Caco-2 (cell line): ENCODE measurements at regions of chrX and their contacts with region 1.

Region 1: GRCh38 chrX:11143931-11144678 is 33.0 kb downstream of the HCCS start:
- DNase-seq: peak; percentile 56 to 69
- H3K4me3 ChIP-seq: no peak overlapping the region
- H3K4me3 Mint-ChIP-seq: no peak overlapping the region
- H3K27ac Mint-ChIP-seq: no peak overlapping the region
- H3K4me1 ChIP-seq: no peaks in the 10 kb centered on the region
- H3K4me1 Mint-ChIP-seq: peaks cover 6% of the 10 kb centered on the region
- H3K27me3 ChIP-seq: no peaks in the 10 kb centered on the region
- H3K27me3 Mint-ChIP-seq: no peaks in the 10 kb centered on the region
- CTCF ChIP-seq: peak; percentile 39 to 52

Region 2: DNA sequence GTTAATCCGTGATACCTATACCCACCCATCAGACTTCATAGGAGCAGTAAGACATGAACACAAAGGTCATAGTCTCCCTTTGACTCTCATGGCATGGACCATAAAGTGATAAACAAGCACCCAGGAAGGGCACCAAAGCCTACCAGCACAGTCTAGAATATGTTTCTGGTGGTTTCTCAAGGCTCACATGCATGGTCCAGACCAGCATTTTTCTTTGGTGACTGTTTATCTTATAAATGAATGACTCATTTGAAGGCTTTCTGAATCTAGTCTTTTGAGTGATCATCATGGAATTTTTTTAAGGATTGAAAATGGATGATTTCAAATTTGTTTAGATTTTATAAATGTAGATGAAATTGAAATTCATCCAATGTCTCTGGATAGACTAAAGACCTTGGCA is 117.2 kb after region 1 on chrX:
- CTCF ChIA-PET with region 1: no interaction called
- POLR2A ChIA-PET with region 1: no interaction called
- intact Hi-C with region 1: loop called (anchors 2 kb)
- DNase-seq: no peak
- H3K4me3 ChIP-seq: no peak overlapping the region
- H3K4me3 Mint-ChIP-seq: no peak overlapping the region
- H3K27ac Mint-ChIP-seq: no peak overlapping the region
- H3K4me1 ChIP-seq: peaks cover 16% of the 10 kb centered on the region
- H3K4me1 Mint-ChIP-seq: peaks cover 22% of the 10 kb centered on the region
- H3K27me3 ChIP-seq: no peaks in the 10 kb centered on the region
- H3K27me3 Mint-ChIP-seq: no peaks in the 10 kb centered on the region
- CTCF ChIP-seq: no peak

Region 3: DNA sequence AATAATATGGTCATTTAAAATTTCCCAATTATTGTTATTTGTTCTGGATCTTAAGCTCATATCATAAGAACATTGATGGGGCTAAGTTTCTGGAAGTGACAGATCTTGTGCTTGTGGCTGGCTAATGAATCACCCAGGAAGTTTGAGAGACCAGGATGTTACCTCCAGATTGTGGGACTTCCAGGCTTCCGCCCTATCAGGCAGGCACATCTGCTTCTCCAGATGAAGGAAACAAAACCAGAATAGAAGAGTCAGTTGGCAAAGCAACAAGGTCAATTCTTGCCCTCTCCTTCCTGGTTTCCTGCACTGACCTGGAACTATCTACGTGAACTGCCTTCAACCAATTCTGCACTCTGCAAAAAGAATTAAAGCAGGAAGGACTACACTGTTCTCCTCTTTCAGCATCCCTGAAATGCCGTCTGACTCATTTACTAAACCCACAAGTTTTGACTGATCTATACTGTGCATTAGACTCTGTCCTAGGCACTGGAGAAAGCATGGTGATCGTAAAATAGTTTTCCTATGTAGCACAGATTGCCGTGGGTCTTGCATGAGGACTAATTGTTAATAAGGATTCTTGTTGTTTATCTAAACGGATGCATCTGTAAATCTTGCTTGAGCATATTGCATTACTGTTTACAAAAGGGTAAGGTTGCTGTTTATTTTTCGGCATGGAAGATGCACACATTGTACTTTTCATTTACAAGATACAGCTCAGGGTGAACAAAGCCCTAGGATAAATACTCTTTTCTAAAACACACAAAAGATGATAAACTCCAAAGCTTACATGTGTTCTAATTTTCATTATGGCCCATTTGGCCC is 223.7 kb after region 1 on chrX:
- CTCF ChIA-PET with region 1: no interaction called
- POLR2A ChIA-PET with region 1: no interaction called
- intact Hi-C with region 1: loop called (anchors 1 kb)
- DNase-seq: no peak
- H3K4me3 ChIP-seq: no peak overlapping the region
- H3K4me3 Mint-ChIP-seq: no peak overlapping the region
- H3K27ac Mint-ChIP-seq: no peak overlapping the region
- H3K4me1 ChIP-seq: no peaks in the 10 kb centered on the region
- H3K4me1 Mint-ChIP-seq: peaks cover 7% of the 10 kb centered on the region
- H3K27me3 ChIP-seq: no peaks in the 10 kb centered on the region
- H3K27me3 Mint-ChIP-seq: no peaks in the 10 kb centered on the region
- CTCF ChIP-seq: no peak

Region 4: GRCh38 chrX:11461201-11462001 is 317.3 kb after region 1 on chrX:
- CTCF ChIA-PET with region 1: no interaction called
- POLR2A ChIA-PET with region 1: no interaction called
- intact Hi-C with region 1: loop called (anchors 2 kb)
- DNase-seq: peak; percentile 63 to 79
- H3K4me3 ChIP-seq: no peak overlapping the region
- H3K4me3 Mint-ChIP-seq: peak overlapping the region; percentile 41
- H3K27ac Mint-ChIP-seq: peak overlapping the region; percentile 83
- H3K4me1 ChIP-seq: peaks cover 44% of the 10 kb centered on the region
- H3K4me1 Mint-ChIP-seq: peaks cover 17% of the 10 kb centered on the region
- H3K27me3 ChIP-seq: no peaks in the 10 kb centered on the region
- H3K27me3 Mint-ChIP-seq: no peaks in the 10 kb centered on the region
- CTCF ChIP-seq: no peak

Region 5: GRCh38 chrX:11724122-11725017 is 580.3 kb after region 1 on chrX:
- CTCF ChIA-PET with region 1: no interaction called
- POLR2A ChIA-PET with region 1: no interaction called
- intact Hi-C with region 1: loop called (anchors 2 kb)
- DNase-seq: peak in 1 of 2 experiments; percentile 17
- H3K4me3 ChIP-seq: no peak overlapping the region
- H3K4me3 Mint-ChIP-seq: no peak overlapping the region
- H3K27ac Mint-ChIP-seq: no peak overlapping the region
- H3K4me1 ChIP-seq: no peaks in the 10 kb centered on the region
- H3K4me1 Mint-ChIP-seq: no peaks in the 10 kb centered on the region
- H3K27me3 ChIP-seq: no peaks in the 10 kb centered on the region
- H3K27me3 Mint-ChIP-seq: no peaks in the 10 kb centered on the region
- CTCF ChIP-seq: peak; percentile 42 to 53